ENCODE measurements at regions of chr9 and their contacts with region 1.

Region 1: GRCh38 chr9:36190388-36191287 is at the start of gene CLTA:
- DNase-seq: peak; percentile 82 to 98 (median 94)
- ATAC-seq: peak; percentile 97 to 98
- H3K4me3 Mint-ChIP-seq: peak within 1 kb of the TSS; percentile 88 to 99 (median 96)
- H3K27ac Mint-ChIP-seq: peak within 1 kb of the TSS; percentile 62 to 98 (median 94)
- H3K4me1 Mint-ChIP-seq: peaks cover 32 to 62% (median 47%) of the 10 kb centered on the region in 4 donors
- H3K27me3 Mint-ChIP-seq: peaks cover 0 to 5% (median 0%) of the 10 kb centered on the region in 5 donors
- polyA plus RNA-seq, gene CLTA: 60.8 to 84.5 (median 71.0) TPM

Region 2: DNA sequence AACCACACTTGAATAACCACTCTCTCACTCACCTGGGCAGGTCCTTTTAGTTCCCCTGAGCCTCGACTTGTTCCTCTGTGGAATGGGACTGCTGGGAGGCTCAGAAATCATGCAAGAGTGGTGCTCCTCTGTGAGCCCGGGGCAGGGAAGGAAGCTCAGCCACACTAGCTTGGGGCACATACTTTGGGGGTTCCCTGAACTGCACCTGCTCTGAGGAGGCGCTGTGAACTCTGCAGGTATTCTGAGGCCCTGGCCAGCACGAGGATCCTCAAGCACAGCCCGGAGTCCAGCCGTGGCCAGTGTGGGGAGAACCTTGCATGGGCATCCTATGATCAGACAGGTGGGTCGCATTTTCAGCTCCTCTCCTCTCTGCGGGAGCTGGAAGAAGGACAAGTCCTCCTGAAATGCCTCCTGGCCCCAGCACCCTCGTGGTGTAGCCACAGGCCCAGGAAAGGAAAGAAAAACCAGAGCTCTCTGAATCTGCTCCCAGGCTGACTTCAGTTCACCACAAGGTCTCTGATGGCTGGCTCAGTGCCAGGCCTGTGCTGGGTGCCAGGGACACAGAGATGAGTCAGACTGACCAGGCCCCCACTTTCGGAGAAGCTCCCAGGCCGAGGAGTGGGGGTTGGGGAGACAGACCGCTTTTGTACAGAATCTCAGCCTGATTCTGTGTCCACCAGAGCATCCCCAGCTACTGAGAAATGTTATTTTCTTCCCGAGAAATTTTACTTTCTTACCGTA is 42.2 kb before region 1 on chr9:
- POLR2A ChIA-PET with region 1: interaction called, 13 read pairs
- DNase-seq: peak; percentile 37 to 78 (median 45)
- ATAC-seq: peak in 1 of 2 donors; percentile 16
- H3K4me3 Mint-ChIP-seq: peak overlapping the region in 7 of 10 donors; percentile 10 to 50 (median 26)
- H3K27ac Mint-ChIP-seq: peak overlapping the region; percentile 41 to 88 (median 80)
- H3K4me1 Mint-ChIP-seq: peaks cover 51 to 95% (median 87%) of the 10 kb centered on the region in 4 donors
- H3K27me3 Mint-ChIP-seq: no peaks in the 10 kb centered on the region

Region 3: DNA sequence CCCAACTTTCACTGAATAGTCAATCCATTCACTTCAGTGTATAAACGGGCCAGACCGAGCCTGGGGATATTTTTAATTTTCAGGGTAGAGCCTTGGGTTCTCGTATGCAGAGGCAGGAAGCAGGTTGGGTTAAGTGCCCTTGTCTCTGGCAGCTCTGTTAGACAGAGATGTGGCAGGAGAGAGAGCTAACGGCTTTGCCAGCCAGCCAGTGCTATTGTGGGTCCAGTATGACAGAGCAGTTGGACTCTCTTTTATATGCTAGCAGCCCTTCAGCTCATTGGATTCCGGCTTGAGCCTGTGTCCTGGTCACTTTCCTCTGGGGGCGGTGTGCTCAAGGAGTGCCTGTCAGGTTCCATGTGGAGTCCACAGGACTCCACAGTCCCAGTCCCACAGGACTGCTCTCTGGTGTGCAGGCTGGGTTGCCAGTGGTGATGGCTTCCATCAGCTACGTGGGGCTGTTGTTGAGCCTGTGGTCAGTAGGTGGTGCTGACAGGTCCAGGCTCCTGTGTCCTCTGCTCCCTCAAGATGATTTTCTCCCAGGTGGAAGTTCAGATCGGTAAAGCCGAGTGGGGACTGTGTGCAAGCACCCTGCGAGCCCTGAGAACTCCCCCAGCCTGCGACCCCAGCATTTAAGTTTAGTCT is 14.4 kb after region 1 on chr9:
- POLR2A ChIA-PET with region 1: interaction called, 12 read pairs
- DNase-seq: no peak
- ATAC-seq: no peak
- H3K4me3 Mint-ChIP-seq: no peak overlapping the region
- H3K27ac Mint-ChIP-seq: peak overlapping the region in 2 of 10 donors; percentile 14 to 32
- H3K4me1 Mint-ChIP-seq: peaks cover 20 to 46% (median 36%) of the 10 kb centered on the region in 4 donors
- H3K27me3 Mint-ChIP-seq: no peaks in the 10 kb centered on the region

Region 4: GRCh38 chr9:36258208-36258988 is 67.8 kb after region 1 on chr9 and contains the start of gene GNE:
- POLR2A ChIA-PET with region 1: interaction called, 14 read pairs
- DNase-seq: peak; percentile 92 to 98 (median 96)
- ATAC-seq: peak; percentile 88 to 91
- H3K4me3 Mint-ChIP-seq: peak within 1 kb of the TSS; percentile 96 to 98 (median 98)
- H3K27ac Mint-ChIP-seq: peak within 1 kb of the TSS; percentile 92 to 98 (median 96)
- H3K4me1 Mint-ChIP-seq: peaks cover 4 to 27% (median 15%) of the 10 kb centered on the region in 4 donors
- H3K27me3 Mint-ChIP-seq: no peaks in the 10 kb centered on the region
- polyA plus RNA-seq, gene GNE: 3.7 to 6.1 (median 4.5) TPM

Region 5: GRCh38 chr9:36292631-36293030 is 102.0 kb after region 1 on chr9:
- POLR2A ChIA-PET with region 1: no interaction called
- DNase-seq: no peak
- ATAC-seq: no peak
- H3K4me3 Mint-ChIP-seq: no peak overlapping the region
- H3K27ac Mint-ChIP-seq: peak overlapping the region in 1 of 10 donors; percentile 59
- H3K4me1 Mint-ChIP-seq: no peaks in the 10 kb centered on the region
- H3K27me3 Mint-ChIP-seq: no peaks in the 10 kb centered on the region

Region 6: GRCh38 chr9:36328798-36329411 is 138.3 kb after region 1 on chr9:
- POLR2A ChIA-PET with region 1: interaction called, 12 read pairs
- DNase-seq: peak in 7 of 10 donors; percentile 9 to 66 (median 48)
- ATAC-seq: peak; percentile 57 to 78
- H3K4me3 Mint-ChIP-seq: no peak overlapping the region
- H3K27ac Mint-ChIP-seq: no peak overlapping the region
- H3K4me1 Mint-ChIP-seq: peaks cover 2 to 10% (median 4%) of the 10 kb centered on the region in 4 donors
- H3K27me3 Mint-ChIP-seq: no peaks in the 10 kb centered on the region